Activated T-helper 2 cell treated with anti-CD3 and anti-CD28 coated beads, Interferon-gamma antibody, Interleukin-2, Interleukin-4, amounts not matched to agents 10 μg/mL and 5 μg/mL and 100 μg/mL, durations not matched to agents 14 hours and 24 hours and 36 hours (primary cell): ENCODE measurements at regions of chr12 and their contacts with region 1.

Region 1: DNA sequence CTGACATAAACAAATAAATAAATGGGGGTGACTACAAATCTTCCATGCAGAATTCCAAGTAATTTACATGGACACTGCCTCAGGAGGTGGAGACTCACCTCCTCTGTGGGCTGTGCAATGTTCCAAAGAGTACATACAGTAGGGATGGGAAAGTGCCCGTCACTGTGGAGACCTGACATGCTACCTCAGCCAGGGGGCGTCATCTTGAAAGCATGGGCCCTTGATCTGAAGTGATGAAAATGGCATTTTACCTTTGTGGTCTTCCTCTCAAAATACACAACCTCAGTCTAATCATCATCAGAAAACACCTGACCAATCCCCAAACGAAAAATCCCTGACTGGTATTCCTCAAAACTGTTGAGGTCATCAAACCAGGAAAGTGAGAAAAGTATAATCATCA is 48.4 kb downstream of the ANAPC7 start:
- DNase-seq: no peak
- H3K4me3 Mint-ChIP-seq: no peak overlapping the region
- H3K27ac Mint-ChIP-seq: no peak overlapping the region
- H3K4me1 Mint-ChIP-seq: peaks cover 25% of the 10 kb centered on the region
- H3K27me3 Mint-ChIP-seq: no peaks in the 10 kb centered on the region

Region 2: GRCh38 chr12:110183386-110183785 is 171.7 kb before region 1 on chr12:
- intact Hi-C with region 1: no loop called
- DNase-seq: no peak
- H3K4me3 Mint-ChIP-seq: no peak overlapping the region
- H3K27ac Mint-ChIP-seq: no peak overlapping the region
- H3K4me1 Mint-ChIP-seq: no peaks in the 10 kb centered on the region
- H3K27me3 Mint-ChIP-seq: no peaks in the 10 kb centered on the region

Region 3: GRCh38 chr12:110431957-110432587 is 77.0 kb after region 1 on chr12:
- intact Hi-C with region 1: loop called (anchors 1 kb)
- DNase-seq: no peak
- H3K4me3 Mint-ChIP-seq: no peak overlapping the region
- H3K27ac Mint-ChIP-seq: no peak overlapping the region
- H3K4me1 Mint-ChIP-seq: peaks cover 1% of the 10 kb centered on the region
- H3K27me3 Mint-ChIP-seq: no peaks in the 10 kb centered on the region

Region 4: DNA sequence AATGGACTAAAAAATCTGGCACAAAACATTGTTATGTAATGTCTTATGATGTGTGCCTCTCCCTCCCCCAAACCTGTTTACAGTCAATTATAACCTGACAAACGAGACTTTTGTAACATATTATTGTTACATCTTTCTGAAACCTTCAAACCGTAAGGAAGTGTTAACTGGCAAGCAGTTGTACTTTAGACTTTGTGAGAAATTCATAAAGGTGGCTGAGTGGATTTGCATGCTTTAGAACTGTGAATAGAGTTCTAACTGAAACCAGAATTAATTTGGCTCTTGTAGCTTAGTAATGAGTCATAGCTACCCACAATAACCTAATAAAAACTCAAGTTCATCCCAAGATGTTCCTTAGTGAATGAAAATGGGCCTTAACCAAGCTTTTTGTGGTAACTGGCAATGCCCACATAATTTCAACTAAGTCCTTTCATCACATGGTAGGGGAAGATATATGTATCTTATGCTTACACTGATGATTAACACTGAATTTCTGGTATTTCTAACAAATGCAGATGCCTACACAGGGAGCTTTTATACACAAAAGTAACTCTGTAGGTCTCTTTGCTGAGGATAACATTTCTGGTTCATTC is 176.8 kb after region 1 on chr12:
- intact Hi-C with region 1: no loop called
- DNase-seq: no peak
- H3K4me3 Mint-ChIP-seq: no peak overlapping the region
- H3K27ac Mint-ChIP-seq: peak overlapping the region; percentile 57
- H3K4me1 Mint-ChIP-seq: peaks cover 27% of the 10 kb centered on the region
- H3K27me3 Mint-ChIP-seq: no peaks in the 10 kb centered on the region